IMR-90 (cell line): ENCODE measurements at regions of chr1 and their contacts with region 1.

Region 1: GRCh38 chr1:45876000-45876617 is 72.7 kb downstream of the MAST2 start:
- DNase-seq: no peak
- ATAC-seq: no peak
- H3K4me3 ChIP-seq: no peak overlapping the region
- H3K27ac ChIP-seq: no peak overlapping the region
- H3K4me1 ChIP-seq: peaks cover 7% of the 10 kb centered on the region
- H3K27me3 ChIP-seq: no peaks in the 10 kb centered on the region
- CTCF ChIP-seq: no peak
- POLR2A ChIP-seq: no peak
- RAD21 ChIP-seq: no peak

Region 2: DNA sequence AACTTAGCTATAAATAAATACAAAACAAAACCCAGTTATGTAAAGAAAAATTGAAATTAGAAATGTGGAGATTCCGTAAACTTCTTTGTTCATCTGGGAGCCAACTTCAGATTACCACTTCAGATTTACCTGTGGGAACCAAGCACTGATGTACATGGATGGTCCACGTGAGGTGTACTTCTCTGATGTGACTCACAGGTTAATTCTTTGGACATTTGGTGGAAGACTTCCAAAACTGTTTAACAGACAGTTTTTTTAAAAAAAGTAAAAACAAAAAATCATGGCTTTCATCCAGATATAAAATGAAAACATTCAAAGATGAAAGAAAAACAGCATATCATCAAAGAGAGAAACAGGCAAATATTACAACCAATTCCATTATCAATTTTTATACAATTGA is 19.3 kb after region 1 on chr1:
- CTCF ChIA-PET with region 1: interaction called, 4 read pairs
- POLR2A ChIA-PET with region 1: interaction called, 12 read pairs
- dilution Hi-C with region 1: no loop called
- in situ Hi-C with region 1: no loop called
- intact Hi-C with region 1: no loop called
- DNase-seq: no peak
- ATAC-seq: no peak
- H3K4me3 ChIP-seq: no peak overlapping the region
- H3K27ac ChIP-seq: no peak overlapping the region
- H3K4me1 ChIP-seq: peaks cover 4% of the 10 kb centered on the region; the same call in 1 of the 2 replicates
- H3K27me3 ChIP-seq: no peaks in the 10 kb centered on the region
- CTCF ChIP-seq: no peak
- POLR2A ChIP-seq: no peak
- RAD21 ChIP-seq: no peak

Region 3: DNA sequence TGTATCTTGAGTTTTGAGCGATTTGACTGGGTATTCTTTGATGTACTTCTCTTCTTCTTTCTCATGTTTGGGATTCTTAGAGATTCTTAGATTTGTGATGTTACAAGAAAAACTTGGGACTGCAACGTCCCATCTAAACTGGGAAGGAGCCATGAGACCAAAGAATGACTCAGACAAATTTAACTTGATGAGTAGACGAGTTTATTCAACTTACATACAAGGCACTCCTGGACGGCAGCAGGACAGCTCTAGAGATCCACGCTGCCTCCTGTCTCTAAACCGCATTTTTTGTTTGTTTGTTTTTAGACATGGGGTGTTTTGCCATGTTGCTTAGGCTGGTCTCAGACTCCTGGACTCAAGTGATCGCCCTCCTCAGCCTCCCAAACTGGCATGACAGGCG is 119.2 kb after region 1 on chr1:
- CTCF ChIA-PET with region 1: no interaction called
- POLR2A ChIA-PET with region 1: interaction called, 11 read pairs
- dilution Hi-C with region 1: no loop called
- in situ Hi-C with region 1: no loop called
- intact Hi-C with region 1: no loop called
- DNase-seq: peak; percentile 68
- ATAC-seq: peak; percentile 79
- H3K4me3 ChIP-seq: no peak overlapping the region
- H3K27ac ChIP-seq: no peak overlapping the region
- H3K4me1 ChIP-seq: peaks cover 3% of the 10 kb centered on the region; the same call in 1 of the 2 replicates
- H3K27me3 ChIP-seq: no peaks in the 10 kb centered on the region
- CTCF ChIP-seq: no peak
- POLR2A ChIP-seq: no peak
- RAD21 ChIP-seq: no peak

Region 4: DNA sequence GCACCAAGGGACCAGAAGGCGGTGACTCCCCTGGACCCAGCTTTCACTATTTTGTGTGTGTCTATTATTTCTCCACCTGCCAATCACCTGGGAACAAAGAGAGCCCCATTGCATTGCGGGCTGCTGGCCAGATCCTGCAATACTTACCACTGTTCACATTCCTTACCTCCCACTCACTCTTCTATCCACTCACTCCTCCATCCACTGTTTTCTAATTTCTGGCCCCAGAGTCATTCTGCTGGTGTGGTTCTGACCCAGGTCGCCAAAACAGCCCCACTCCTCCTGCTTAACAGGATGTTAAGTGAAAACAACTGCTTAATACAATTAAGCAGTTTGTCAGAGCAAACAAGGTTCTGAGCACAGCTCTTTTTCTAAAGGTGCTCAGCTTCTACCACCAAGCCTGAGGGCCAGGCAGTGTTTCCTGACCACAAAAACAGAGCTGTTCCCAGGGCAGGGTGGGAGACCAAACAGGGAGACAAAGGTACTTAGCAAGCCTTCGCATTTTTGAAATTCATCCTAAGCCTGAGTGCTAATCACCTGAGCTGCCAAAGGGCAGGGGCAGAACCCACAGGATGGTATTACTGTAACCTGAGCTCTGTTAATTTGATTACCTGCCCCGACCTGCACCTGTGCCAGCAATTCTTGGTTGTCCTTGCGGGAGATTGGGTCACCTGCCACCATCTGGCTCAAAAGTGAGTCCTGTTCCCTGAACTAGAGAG is 881.3 kb after region 1 on chr1:
- CTCF ChIA-PET with region 1: no interaction called
- POLR2A ChIA-PET with region 1: no interaction called
- dilution Hi-C with region 1: no loop called
- in situ Hi-C with region 1: no loop called
- intact Hi-C with region 1: no loop called
- DNase-seq: peak; percentile 3
- ATAC-seq: no peak; the same call in 1 of the 2 replicates
- H3K4me3 ChIP-seq: no peak overlapping the region
- H3K27ac ChIP-seq: no peak overlapping the region
- H3K4me1 ChIP-seq: no peaks in the 10 kb centered on the region
- H3K27me3 ChIP-seq: no peaks in the 10 kb centered on the region
- CTCF ChIP-seq: no peak
- POLR2A ChIP-seq: no peak
- RAD21 ChIP-seq: no peak